SK-N-SH (cell line): ENCODE measurements at regions of chr17 and their contacts with region 1.

Region 1: GRCh38 chr17:67157732-67158639 is 87.0 kb downstream of the HELZ start:
- DNase-seq: peak; percentile 75
- H3K4me3 ChIP-seq: no peak overlapping the region
- H3K27ac ChIP-seq: peak overlapping the region; percentile 47 to 97; a peak in 3 of 4 replicates
- H3K4me1 ChIP-seq: peaks cover 5 to 34% of the 10 kb centered on the region in 2 experiments; a peak in 3 of 4 replicates
- H3K27me3 ChIP-seq: no peaks in the 10 kb centered on the region
- CTCF ChIP-seq: peak; percentile 76
- EP300 ChIP-seq: peak in 1 of 2 experiments; percentile 18; a peak in 1 of 4 replicates
- RAD21 ChIP-seq: peak; percentile 100

Region 2: DNA sequence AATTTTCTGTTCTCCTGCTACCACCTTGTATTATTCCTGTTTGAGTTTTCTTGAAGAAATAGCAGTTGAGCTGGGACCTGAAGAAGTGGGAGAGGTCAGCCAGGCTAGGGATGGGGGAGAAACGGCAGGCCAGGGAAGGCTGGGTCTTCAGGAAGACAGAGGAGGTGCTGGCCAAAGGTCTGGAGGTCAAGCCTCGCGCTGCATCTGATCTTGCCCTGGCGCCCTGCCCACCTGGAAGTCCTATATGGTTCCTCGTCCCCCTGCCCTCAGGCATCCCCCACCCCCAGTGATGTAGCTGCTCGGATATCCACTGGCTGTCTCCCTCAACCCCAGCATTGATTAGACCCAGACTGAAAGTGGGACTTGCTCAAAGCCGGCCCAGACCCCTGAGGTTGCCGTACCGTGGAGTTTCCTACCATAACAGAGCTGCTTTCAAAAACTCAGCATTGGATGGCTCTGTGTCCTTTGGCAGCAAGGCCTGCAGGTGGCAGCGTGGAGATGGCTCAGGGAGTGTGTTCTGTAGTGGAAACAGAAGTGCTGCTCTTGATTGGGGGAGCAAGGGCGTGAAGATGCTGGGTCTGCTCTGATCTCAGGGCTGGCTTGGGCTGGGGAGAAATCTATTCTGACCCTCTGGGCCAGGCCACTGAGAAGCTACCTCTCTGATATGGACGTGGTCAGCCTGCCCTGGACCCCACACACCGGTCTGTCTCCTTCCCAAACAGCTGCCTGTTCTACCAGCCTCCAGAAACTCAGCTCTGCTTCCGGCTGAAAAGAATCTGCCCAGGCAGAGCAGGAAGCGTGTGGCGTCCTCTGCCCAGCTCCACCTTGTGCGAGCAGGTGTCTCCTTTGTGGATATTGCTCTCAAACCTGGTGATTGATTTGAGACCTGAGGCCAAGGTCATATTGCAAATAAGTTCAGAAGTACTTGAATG is 430.1 kb before region 1 on chr17:
- CTCF ChIA-PET with region 1: interaction called, 77 read pairs
- POLR2A ChIA-PET with region 1: interaction called, 5 read pairs
- DNase-seq: peak; percentile 87
- H3K4me3 ChIP-seq: no peak overlapping the region; a peak in 1 of 4 replicates
- H3K27ac ChIP-seq: peak overlapping the region in 1 of 2 experiments; percentile 36; a peak in 2 of 4 replicates
- H3K4me1 ChIP-seq: peaks cover 9 to 25% of the 10 kb centered on the region in 2 experiments; a peak in 1 of 4 replicates
- H3K27me3 ChIP-seq: no peaks in the 10 kb centered on the region
- CTCF ChIP-seq: peak; percentile 70
- EP300 ChIP-seq: no peak
- RAD21 ChIP-seq: peak; percentile 93

Region 3: DNA sequence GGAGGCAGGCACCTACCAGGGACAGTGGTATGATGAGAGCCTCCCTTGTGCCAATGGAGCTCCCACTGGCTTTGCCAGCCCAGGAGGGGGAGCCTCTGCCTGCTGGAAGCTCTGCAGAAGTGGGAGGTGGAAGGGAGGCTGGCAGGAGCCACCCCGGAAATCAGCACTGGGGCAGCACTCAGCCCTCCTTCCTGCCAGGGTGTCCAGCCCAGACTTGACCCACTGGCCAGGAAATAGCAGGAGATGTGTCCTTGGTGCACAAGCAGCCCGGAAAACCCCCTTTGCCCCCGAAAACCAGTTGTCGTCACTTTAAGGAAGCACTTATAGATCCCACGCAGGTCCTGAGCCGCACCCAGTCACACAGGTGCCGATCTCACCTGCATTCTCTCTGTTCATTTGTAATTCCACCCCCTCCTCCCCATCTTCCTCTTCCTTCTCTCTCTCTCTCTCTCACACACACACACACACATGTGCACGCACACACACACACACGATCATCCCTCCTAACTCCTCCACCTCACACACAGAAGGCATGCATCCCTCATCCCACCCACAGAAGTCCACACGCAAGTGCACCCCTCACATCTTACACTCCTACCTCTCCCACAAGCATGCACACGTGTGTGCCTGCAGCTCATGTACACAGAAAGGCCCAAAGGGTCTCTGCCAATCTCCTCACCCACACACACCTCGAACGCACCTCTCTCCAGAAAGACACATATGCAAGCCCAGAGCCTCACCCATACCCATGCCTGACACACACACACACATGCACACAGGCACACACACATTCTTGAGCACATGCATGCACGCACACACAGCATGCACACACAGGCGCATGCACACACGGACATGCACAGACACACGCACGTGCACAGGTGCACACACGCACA is 242.5 kb before region 1 on chr17:
- CTCF ChIA-PET with region 1: interaction called, 39 read pairs
- POLR2A ChIA-PET with region 1: no interaction called
- DNase-seq: peak; percentile 76
- H3K4me3 ChIP-seq: no peak overlapping the region
- H3K27ac ChIP-seq: no peak overlapping the region
- H3K4me1 ChIP-seq: peaks cover 0 to 6% of the 10 kb centered on the region in 2 experiments; a peak in 1 of 4 replicates
- H3K27me3 ChIP-seq: no peaks in the 10 kb centered on the region; the same call in 1 of the 2 replicates
- CTCF ChIP-seq: peak; percentile 58
- EP300 ChIP-seq: no peak
- RAD21 ChIP-seq: peak; percentile 89

Region 4: DNA sequence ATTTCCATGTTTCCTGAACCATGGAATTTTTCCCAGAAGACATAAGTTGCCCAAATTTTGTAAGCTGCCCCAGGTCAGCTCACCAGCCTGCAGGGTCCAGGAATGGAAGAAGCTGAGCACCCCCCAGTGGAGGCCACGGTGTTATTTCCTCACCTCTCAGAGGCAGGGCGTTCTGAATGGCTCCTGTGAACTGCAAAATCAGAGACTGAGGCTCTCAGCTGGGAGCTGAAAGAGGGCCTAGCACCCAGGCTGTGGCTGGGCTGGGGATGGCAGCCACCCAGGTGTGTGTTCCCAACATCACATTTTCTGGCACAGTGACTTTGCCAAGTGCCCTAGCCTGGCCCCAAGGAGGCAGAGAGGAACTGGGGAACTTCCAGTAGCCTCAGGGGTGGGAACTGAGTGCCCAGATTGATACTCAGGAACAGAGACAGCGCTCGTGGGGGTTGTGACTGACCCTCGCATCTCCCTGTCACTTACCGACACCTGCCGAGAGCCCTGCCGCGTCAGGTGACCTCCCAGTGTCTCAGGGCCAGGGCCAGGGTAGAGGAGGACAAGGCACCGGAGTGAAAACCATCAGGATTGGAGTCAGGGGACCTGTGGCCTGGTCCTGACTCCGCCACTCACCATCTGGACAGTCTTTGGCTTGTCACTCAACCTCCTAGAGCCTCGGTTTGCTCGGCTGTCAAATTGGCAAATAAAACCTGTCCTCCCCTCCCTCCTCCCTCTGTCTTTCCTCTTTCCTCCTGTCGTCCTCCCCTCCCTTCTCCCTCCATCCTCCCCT is 182.2 kb before region 1 on chr17:
- CTCF ChIA-PET with region 1: interaction called, 60 read pairs
- POLR2A ChIA-PET with region 1: interaction called, 4 read pairs
- DNase-seq: no peak
- H3K4me3 ChIP-seq: no peak overlapping the region
- H3K27ac ChIP-seq: peak overlapping the region in 1 of 2 experiments; percentile 95; a peak in 2 of 4 replicates
- H3K4me1 ChIP-seq: peaks cover 5 to 80% of the 10 kb centered on the region in 2 experiments; a peak in 3 of 4 replicates
- H3K27me3 ChIP-seq: no peaks in the 10 kb centered on the region
- CTCF ChIP-seq: peak; percentile 51
- EP300 ChIP-seq: 0 out of 4 replicates have a peak, but pooled peaks of 1 of the 2 experiments have one; percentile 1
- RAD21 ChIP-seq: peak; percentile 65

Region 5: DNA sequence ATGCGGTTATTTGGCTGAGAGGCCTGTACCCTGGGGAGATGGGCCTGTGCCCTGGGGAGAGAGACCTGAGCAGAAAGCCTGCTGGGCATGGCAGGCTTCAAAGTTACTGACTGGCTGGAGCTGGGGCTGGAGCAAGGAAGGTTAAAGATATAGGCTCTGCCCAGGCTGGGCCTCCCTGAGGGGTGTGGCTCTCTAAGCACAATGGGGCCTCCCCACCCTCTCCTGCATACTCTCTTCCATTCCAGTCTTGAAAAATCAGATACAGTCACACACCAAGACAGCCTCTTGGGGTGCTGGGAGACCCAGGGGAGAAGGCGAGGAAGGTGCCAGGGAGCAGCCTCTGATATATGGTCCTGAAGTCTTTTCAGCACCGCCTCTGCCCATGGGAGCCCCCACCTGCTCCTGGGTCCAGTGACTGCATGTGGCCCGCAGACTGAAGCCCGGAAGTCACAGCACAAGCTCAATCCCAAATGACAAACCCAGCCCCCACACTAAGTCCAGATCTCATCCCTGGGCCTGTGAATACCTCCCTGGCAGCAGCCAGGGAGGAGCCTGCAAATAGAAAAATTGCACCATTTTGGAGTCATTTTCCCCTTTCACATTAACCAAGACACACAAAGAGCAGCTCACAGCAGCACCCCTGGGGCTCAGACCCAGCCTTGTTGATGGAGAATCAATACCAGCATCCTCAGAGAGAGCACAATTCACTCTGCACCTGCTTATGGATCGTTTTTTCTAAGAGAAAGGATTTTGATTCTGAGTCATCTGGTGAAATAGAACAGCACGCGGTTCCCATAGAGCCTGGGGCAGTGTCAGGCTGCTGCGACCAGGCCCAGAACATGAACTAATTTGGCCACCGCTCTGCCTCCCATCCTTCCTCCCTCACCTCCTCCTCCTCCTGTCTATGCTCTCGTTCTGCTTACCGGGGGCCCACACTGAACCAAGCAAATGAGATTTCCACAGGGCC is 139.2 kb before region 1 on chr17:
- CTCF ChIA-PET with region 1: interaction called, 39 read pairs
- POLR2A ChIA-PET with region 1: interaction called, 13 read pairs
- DNase-seq: peak; percentile 75
- H3K4me3 ChIP-seq: no peak overlapping the region
- H3K27ac ChIP-seq: peak overlapping the region in 1 of 2 experiments; percentile 99; a peak in 2 of 4 replicates
- H3K4me1 ChIP-seq: peaks cover 0 to 83% of the 10 kb centered on the region in 2 experiments; a peak in 2 of 4 replicates
- H3K27me3 ChIP-seq: no peaks in the 10 kb centered on the region
- CTCF ChIP-seq: no peak
- EP300 ChIP-seq: peak in 1 of 2 experiments; percentile 86; a peak in 2 of 4 replicates
- RAD21 ChIP-seq: peak; percentile 21; the same call in 1 of the 2 replicates

Region 6: GRCh38 chr17:67125417-67125816 is 32.6 kb before region 1 on chr17:
- CTCF ChIA-PET with region 1: interaction called, 28 read pairs
- POLR2A ChIA-PET with region 1: no interaction called
- DNase-seq: peak; percentile 71
- H3K4me3 ChIP-seq: no peak overlapping the region
- H3K27ac ChIP-seq: peak overlapping the region; percentile 29 to 99; a peak in 3 of 4 replicates
- H3K4me1 ChIP-seq: peaks cover 4 to 47% of the 10 kb centered on the region in 2 experiments; a peak in 3 of 4 replicates
- H3K27me3 ChIP-seq: no peaks in the 10 kb centered on the region
- CTCF ChIP-seq: no peak
- EP300 ChIP-seq: peak; percentile 34 to 100; a peak in 3 of 4 replicates
- RAD21 ChIP-seq: peak; percentile 52

Region 7: GRCh38 chr17:67171560-67171959 is 13.6 kb after region 1 on chr17:
- CTCF ChIA-PET with region 1: interaction called, 11 read pairs
- POLR2A ChIA-PET with region 1: no interaction called
- DNase-seq: no peak
- H3K4me3 ChIP-seq: no peak overlapping the region
- H3K27ac ChIP-seq: no peak overlapping the region
- H3K4me1 ChIP-seq: no peaks in the 10 kb centered on the region
- H3K27me3 ChIP-seq: no peaks in the 10 kb centered on the region
- CTCF ChIP-seq: no peak
- EP300 ChIP-seq: no peak
- RAD21 ChIP-seq: no peak

Region 8: DNA sequence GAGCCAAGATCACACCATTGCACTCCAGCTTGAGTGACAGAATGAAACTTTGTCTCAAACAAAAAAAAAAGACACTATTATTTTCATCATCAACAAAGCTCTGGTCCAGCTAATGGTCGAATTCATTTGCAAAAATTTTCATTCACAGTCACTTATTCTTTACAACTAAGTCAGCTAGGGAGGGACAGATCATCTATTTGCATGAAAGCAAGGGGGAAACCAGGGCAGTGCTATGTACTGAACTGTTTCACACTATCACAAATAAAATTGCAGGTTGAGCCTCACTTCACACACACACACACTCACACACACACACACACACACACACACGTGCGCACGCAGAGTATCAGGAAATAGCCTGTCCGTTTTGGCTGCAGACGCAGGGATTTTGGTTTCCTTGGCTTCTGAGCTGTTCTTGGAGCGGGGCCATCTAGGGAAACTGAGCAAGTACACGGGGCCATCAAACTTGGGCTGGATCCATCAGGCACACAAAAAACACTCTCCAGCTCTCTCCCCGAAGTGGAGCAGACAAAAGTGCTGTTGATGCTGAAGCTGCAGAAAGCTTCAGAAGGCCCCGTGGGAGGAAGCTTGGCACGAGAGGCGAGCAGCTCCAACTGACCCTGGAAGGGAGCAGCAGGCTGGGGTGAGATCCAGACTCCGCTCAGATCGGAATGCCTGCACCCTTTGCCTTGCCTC is 131.3 kb after region 1 on chr17:
- CTCF ChIA-PET with region 1: no interaction called
- POLR2A ChIA-PET with region 1: no interaction called
- DNase-seq: no peak
- H3K4me3 ChIP-seq: no peak overlapping the region
- H3K27ac ChIP-seq: no peak overlapping the region
- H3K4me1 ChIP-seq: no peaks in the 10 kb centered on the region
- H3K27me3 ChIP-seq: no peaks in the 10 kb centered on the region
- CTCF ChIP-seq: no peak
- EP300 ChIP-seq: no peak
- RAD21 ChIP-seq: no peak